ENCODE measurements at regions of chr3 and their contacts with region 1.

Region 1: DNA sequence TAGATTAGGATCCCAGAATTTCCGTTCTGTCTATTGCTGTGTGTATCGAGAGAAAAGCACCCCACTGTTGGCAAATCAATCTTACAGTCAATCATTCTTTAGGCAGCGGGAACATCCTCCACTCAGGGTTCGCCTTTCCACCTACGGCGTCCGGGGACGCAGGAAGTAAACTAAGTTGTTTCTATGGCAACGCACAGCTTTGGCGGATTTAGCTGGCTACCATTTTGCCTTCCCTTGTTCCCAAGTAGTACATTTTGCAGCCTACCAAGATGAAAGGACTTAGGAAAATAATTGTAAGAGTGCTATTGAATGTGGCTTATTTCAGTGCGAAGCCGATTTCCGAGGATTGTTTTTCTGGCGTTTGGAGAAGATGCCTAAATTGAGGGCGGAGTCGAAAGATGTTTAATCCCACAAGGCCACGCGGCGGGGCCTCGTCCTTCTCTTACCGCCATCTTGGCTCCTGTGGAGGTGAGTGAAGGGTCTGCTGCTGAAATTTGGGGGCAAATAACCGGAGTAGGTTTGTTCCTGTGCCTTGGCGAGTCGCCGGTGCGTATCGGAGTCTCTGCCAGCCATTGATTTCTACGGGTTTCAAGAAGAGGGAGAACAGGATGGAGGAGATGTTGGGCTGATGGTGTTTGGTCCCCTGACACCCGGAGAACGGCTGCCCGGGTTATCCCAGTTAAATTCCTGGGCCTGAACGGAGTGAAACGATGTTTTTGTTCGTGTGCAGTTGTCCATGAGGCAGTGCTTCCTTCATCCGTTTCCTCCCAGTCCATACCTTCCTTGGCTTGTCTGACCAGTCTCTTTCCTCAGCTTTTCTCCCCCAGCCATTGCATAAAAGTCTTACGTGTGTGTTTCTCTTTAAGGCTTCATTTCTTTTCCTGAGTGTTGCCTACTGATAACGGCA is at the start of gene RPL35A:
- DNase-seq: peak; percentile 79 to 96
- ATAC-seq: peak; percentile 92 to 95 (median 92)
- H3K4me3 ChIP-seq: peak within 1 kb of the TSS; percentile 64
- H3K4me3 Mint-ChIP-seq: peak within 1 kb of the TSS; percentile 97
- H3K27ac ChIP-seq: peak within 1 kb of the TSS; percentile 89
- H3K27ac Mint-ChIP-seq: peak within 1 kb of the TSS; percentile 98 to 100
- H3K4me1 ChIP-seq: peaks cover 28% of the 10 kb centered on the region
- H3K4me1 Mint-ChIP-seq: peaks cover 33 to 42% of the 10 kb centered on the region in 2 donors
- H3K27me3 ChIP-seq: no peaks in the 10 kb centered on the region
- H3K27me3 Mint-ChIP-seq: no peaks in the 10 kb centered on the region
- CTCF ChIP-seq: no peak
- total RNA-seq, gene RPL35A: 693 to 869 (median 848) TPM

Region 2: DNA sequence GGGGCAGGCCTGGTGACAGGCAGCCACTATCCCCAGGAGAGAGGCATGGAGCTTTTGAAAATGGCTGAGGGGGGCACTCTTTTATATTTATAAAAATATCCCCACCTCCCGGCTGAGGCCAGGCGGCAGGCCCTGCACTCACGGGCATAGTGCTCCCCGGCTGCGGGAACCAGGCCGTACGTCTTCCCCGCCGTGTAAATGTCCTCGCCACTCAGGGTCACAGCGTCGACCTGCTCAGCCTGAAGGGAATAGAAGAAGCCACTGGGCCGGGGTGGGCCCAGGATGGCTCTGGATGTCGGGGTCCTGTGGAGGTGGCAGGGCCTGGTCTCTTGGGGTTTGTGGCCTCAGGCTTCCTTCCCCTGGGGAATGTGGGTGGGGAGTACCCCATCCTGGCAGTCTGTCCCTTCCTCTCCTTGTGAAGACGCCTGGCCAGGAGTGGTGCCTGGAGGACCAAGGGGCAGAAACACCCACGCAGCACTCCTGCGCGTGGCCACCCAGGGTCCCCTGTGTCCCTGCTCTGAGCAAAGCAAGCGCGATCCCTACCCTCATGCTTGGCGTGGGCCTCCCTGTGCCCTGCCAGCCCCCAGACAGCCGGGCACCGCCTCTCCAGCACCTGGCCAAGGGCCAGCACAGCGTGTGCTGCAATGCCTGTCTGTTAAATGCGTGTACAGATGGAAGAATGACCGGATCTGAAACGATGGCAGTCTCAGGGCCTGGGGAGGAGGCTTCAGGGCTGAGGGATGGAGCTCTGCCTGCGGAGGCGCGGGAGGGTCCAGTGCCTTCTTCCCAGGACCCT is 939.3 kb before region 1 on chr3:
- intact Hi-C with region 1: no loop called
- DNase-seq: no peak
- ATAC-seq: no peak
- H3K4me3 ChIP-seq: no peak overlapping the region
- H3K4me3 Mint-ChIP-seq: no peak overlapping the region
- H3K27ac ChIP-seq: no peak overlapping the region
- H3K27ac Mint-ChIP-seq: no peak overlapping the region
- H3K4me1 ChIP-seq: no peaks in the 10 kb centered on the region
- H3K4me1 Mint-ChIP-seq: no peaks in the 10 kb centered on the region
- H3K27me3 ChIP-seq: no peaks in the 10 kb centered on the region
- H3K27me3 Mint-ChIP-seq: no peaks in the 10 kb centered on the region
- CTCF ChIP-seq: no peak

Region 3: DNA sequence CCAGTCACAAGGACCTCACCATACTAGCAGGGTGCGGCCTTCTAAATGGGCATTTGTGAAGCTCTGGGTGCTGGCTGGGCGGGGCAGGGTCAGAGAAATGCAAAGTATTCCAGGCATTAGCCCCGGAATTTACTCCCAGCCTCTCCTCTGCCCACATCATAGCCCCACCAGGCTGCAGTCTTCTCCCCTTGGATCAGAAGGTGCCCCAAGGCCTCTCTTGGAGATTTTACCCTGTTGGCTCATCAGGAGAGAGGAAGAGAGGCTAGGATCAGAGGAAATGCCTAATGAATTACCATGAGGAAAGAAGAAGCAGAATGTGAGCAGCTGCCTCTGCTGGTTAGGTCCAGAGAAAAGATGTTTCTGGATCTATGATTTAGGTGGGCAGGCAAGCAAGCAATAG is 459.9 kb before region 1 on chr3:
- intact Hi-C with region 1: no loop called
- DNase-seq: no peak
- ATAC-seq: no peak
- H3K4me3 ChIP-seq: no peak overlapping the region
- H3K4me3 Mint-ChIP-seq: no peak overlapping the region
- H3K27ac ChIP-seq: no peak overlapping the region
- H3K27ac Mint-ChIP-seq: no peak overlapping the region
- H3K4me1 ChIP-seq: no peaks in the 10 kb centered on the region
- H3K4me1 Mint-ChIP-seq: no peaks in the 10 kb centered on the region
- H3K27me3 ChIP-seq: no peaks in the 10 kb centered on the region
- H3K27me3 Mint-ChIP-seq: peaks cover 11 to 13% of the 10 kb centered on the region in 2 donors
- CTCF ChIP-seq: no peak

Region 4: GRCh38 chr3:197854596-197855343 is 95.2 kb before region 1 on chr3:
- intact Hi-C with region 1: no loop called
- DNase-seq: no peak
- ATAC-seq: no peak
- H3K4me3 ChIP-seq: no peak overlapping the region
- H3K4me3 Mint-ChIP-seq: no peak overlapping the region
- H3K27ac ChIP-seq: no peak overlapping the region
- H3K27ac Mint-ChIP-seq: no peak overlapping the region
- H3K4me1 ChIP-seq: no peaks in the 10 kb centered on the region
- H3K4me1 Mint-ChIP-seq: no peaks in the 10 kb centered on the region
- H3K27me3 ChIP-seq: no peaks in the 10 kb centered on the region
- H3K27me3 Mint-ChIP-seq: no peaks in the 10 kb centered on the region
- CTCF ChIP-seq: no peak

Region 5: GRCh38 chr3:197959898-197960693 is 10.1 kb after region 1 on chr3 and contains the start of gene LMLN:
- intact Hi-C with region 1: loop called (anchors 1 kb)
- DNase-seq: peak; percentile 95 to 98
- ATAC-seq: peak; percentile 94 to 99 (median 94)
- H3K4me3 ChIP-seq: peak within 1 kb of the TSS; percentile 90
- H3K4me3 Mint-ChIP-seq: peak within 1 kb of the TSS; percentile 91
- H3K27ac ChIP-seq: peak within 1 kb of the TSS; percentile 80
- H3K27ac Mint-ChIP-seq: peak within 1 kb of the TSS; percentile 90 to 93
- H3K4me1 ChIP-seq: peaks cover 22% of the 10 kb centered on the region
- H3K4me1 Mint-ChIP-seq: peaks cover 40 to 49% of the 10 kb centered on the region in 2 donors
- H3K27me3 ChIP-seq: no peaks in the 10 kb centered on the region
- H3K27me3 Mint-ChIP-seq: no peaks in the 10 kb centered on the region
- CTCF ChIP-seq: no peak
- total RNA-seq, gene LMLN: 2.3 to 4.5 (median 4.0) TPM

Region 6: DNA sequence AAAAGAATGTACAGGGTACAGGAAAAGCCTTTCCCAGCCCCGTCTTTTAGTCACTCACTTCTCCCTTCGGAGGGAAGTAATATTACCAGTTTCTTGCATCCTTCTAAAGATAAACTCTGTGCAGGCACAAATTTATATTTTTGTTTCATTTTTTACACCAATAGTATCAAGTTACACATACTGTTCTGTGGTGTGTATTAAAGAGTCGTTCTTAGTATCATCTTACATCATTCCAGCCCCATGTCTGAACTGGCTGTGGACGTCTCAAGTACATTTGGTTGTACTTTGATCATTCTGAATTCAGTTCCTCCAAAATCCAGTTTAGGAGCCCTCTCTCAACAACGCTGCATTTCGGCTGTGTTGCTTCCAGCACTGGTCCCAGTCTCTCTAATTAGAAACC is 78.7 kb after region 1 on chr3:
- intact Hi-C with region 1: no loop called
- DNase-seq: no peak
- ATAC-seq: no peak
- H3K4me3 ChIP-seq: no peak overlapping the region
- H3K4me3 Mint-ChIP-seq: no peak overlapping the region
- H3K27ac ChIP-seq: no peak overlapping the region
- H3K27ac Mint-ChIP-seq: no peak overlapping the region
- H3K4me1 ChIP-seq: no peaks in the 10 kb centered on the region
- H3K4me1 Mint-ChIP-seq: peaks cover 4 to 5% of the 10 kb centered on the region in 2 donors
- H3K27me3 ChIP-seq: no peaks in the 10 kb centered on the region
- H3K27me3 Mint-ChIP-seq: no peaks in the 10 kb centered on the region
- CTCF ChIP-seq: no peak